ENCODE measurements at regions of chr20 and their contacts with region 1.

Region 1: GRCh38 chr20:20712474-20713243 is at the start of gene RALGAPA2:
- DNase-seq: peak; percentile 87 to 97 (median 94)
- ATAC-seq: peak; percentile 95
- H3K4me3 ChIP-seq: peak within 1 kb of the TSS; percentile 66 to 89
- H3K4me3 Mint-ChIP-seq: peak within 1 kb of the TSS; percentile 98
- H3K27ac ChIP-seq: peak within 1 kb of the TSS; percentile 59 to 93
- H3K27ac Mint-ChIP-seq: peak within 1 kb of the TSS; percentile 97
- H3K4me1 ChIP-seq: peaks cover 14% of the 10 kb centered on the region
- H3K4me1 Mint-ChIP-seq: peaks cover 30% of the 10 kb centered on the region
- H3K27me3 ChIP-seq: no peaks in the 10 kb centered on the region
- H3K27me3 Mint-ChIP-seq: peaks cover 2% of the 10 kb centered on the region
- CTCF ChIP-seq: no peak
- total RNA-seq, gene RALGAPA2: 15.4 to 17.5 TPM

Region 2: DNA sequence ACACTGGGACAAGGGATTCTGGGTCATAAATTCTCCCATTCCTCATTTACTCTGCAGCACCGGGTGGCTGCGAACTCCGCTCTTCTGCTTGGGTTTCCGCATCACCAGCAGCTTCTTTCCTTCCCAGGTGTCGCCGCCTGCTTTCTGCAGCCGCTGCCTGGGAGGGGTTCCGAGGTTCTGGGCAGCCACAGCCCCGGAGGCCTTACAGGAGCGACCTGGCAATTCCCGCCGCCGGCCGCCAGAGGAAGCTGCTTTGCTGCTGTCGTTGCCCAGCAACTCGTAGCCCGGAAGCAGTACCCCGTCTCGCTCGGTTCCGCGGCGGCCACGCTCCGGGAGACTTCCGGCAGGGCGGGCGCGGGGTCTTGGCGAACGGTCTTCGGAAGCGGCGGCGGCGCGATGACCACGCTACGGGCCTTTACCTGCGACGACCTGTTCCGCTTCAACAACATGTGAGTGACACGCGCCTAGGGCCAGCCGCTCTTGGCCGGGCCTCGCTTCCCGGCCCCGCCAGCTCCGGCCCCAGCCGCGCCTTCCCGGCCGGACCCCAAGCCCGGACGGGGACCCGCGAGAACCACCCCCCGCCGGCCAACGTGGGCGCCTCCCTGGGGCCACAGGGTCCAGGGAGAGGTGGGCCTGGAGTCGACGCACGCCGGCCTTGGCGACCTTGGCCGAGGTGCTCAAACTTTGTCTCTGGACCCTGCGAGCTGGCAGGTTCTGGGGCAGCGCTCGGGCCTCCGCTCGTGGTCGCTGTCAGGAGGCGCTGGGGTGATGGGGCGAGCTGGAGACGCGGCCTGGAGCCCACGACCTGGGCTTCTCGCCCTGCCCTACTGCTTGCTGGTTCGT is 695.4 kb before region 1 on chr20 and contains the start of gene NAA20:
- CTCF ChIA-PET with region 1: no interaction called
- POLR2A ChIA-PET with region 1: interaction called, 3 read pairs
- intact Hi-C with region 1: loop called in 1 of 2 experiments (anchors 2 kb)
- DNase-seq: peak; percentile 75 to 94 (median 91)
- ATAC-seq: peak; percentile 94
- H3K4me3 ChIP-seq: peak within 1 kb of the TSS; percentile 77 to 89
- H3K4me3 Mint-ChIP-seq: peak within 1 kb of the TSS; percentile 91
- H3K27ac ChIP-seq: peak within 1 kb of the TSS; percentile 63 to 82
- H3K27ac Mint-ChIP-seq: peak within 1 kb of the TSS; percentile 91
- H3K4me1 ChIP-seq: peaks cover 44% of the 10 kb centered on the region
- H3K4me1 Mint-ChIP-seq: peaks cover 53% of the 10 kb centered on the region
- H3K27me3 ChIP-seq: no peaks in the 10 kb centered on the region
- H3K27me3 Mint-ChIP-seq: no peaks in the 10 kb centered on the region
- CTCF ChIP-seq: peak; percentile 58
- total RNA-seq, gene NAA20: 32.9 to 33.2 TPM

Region 3: GRCh38 chr20:20052074-20052970 is 660.3 kb before region 1 on chr20 and contains the starts of genes CFAP61 and CRNKL1:
- CTCF ChIA-PET with region 1: no interaction called
- POLR2A ChIA-PET with region 1: no interaction called
- intact Hi-C with region 1: loop called in 1 of 2 experiments (anchors 1 kb)
- DNase-seq: peak; percentile 93 to 99 (median 98)
- ATAC-seq: peak; percentile 94
- H3K4me3 ChIP-seq: peak within 1 kb of the TSS; percentile 86 to 96
- H3K4me3 Mint-ChIP-seq: peak within 1 kb of the TSS; percentile 99
- H3K27ac ChIP-seq: peak within 1 kb of the TSS; percentile 86 to 92
- H3K27ac Mint-ChIP-seq: peak within 1 kb of the TSS; percentile 98
- H3K4me1 ChIP-seq: peaks cover 12% of the 10 kb centered on the region
- H3K4me1 Mint-ChIP-seq: peaks cover 29% of the 10 kb centered on the region
- H3K27me3 ChIP-seq: no peaks in the 10 kb centered on the region
- H3K27me3 Mint-ChIP-seq: peaks cover 10% of the 10 kb centered on the region
- CTCF ChIP-seq: no peak
- total RNA-seq, gene CFAP61: not detected
- total RNA-seq, gene CRNKL1: 34.1 to 39.7 TPM

Region 4: GRCh38 chr20:20489054-20489453 is 223.6 kb before region 1 on chr20:
- CTCF ChIA-PET with region 1: no interaction called
- POLR2A ChIA-PET with region 1: no interaction called
- intact Hi-C with region 1: no loop called
- DNase-seq: no peak
- ATAC-seq: no peak
- H3K4me3 ChIP-seq: no peak overlapping the region
- H3K4me3 Mint-ChIP-seq: no peak overlapping the region
- H3K27ac ChIP-seq: no peak overlapping the region
- H3K27ac Mint-ChIP-seq: no peak overlapping the region
- H3K4me1 ChIP-seq: no peaks in the 10 kb centered on the region
- H3K4me1 Mint-ChIP-seq: no peaks in the 10 kb centered on the region
- H3K27me3 ChIP-seq: no peaks in the 10 kb centered on the region
- H3K27me3 Mint-ChIP-seq: no peaks in the 10 kb centered on the region
- CTCF ChIP-seq: no peak

Region 5: DNA sequence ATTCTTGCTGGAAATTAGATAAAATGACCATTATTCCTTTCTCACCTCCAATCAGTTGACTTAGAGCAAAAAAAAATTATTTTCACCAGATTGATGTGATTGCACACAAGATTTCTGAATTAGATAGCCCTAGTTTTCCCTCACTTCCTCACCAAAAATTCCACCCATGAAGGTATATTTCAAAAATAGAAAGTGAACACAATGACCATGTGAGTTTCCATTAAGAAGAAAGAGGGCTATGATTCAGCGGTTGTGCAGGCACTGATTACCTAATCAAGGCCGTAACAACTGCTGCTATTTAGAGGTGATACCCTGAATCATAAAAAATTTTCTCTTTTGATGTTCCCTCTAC is 19.3 kb after region 1 on chr20:
- CTCF ChIA-PET with region 1: no interaction called
- POLR2A ChIA-PET with region 1: no interaction called
- intact Hi-C with region 1: no loop called
- DNase-seq: peak in 1 of 9 experiments; percentile 13
- ATAC-seq: no peak
- H3K4me3 ChIP-seq: no peak overlapping the region
- H3K4me3 Mint-ChIP-seq: no peak overlapping the region
- H3K27ac ChIP-seq: no peak overlapping the region
- H3K27ac Mint-ChIP-seq: no peak overlapping the region
- H3K4me1 ChIP-seq: peaks cover 11% of the 10 kb centered on the region
- H3K4me1 Mint-ChIP-seq: peaks cover 11% of the 10 kb centered on the region
- H3K27me3 ChIP-seq: no peaks in the 10 kb centered on the region
- H3K27me3 Mint-ChIP-seq: no peaks in the 10 kb centered on the region
- CTCF ChIP-seq: no peak

Region 6: DNA sequence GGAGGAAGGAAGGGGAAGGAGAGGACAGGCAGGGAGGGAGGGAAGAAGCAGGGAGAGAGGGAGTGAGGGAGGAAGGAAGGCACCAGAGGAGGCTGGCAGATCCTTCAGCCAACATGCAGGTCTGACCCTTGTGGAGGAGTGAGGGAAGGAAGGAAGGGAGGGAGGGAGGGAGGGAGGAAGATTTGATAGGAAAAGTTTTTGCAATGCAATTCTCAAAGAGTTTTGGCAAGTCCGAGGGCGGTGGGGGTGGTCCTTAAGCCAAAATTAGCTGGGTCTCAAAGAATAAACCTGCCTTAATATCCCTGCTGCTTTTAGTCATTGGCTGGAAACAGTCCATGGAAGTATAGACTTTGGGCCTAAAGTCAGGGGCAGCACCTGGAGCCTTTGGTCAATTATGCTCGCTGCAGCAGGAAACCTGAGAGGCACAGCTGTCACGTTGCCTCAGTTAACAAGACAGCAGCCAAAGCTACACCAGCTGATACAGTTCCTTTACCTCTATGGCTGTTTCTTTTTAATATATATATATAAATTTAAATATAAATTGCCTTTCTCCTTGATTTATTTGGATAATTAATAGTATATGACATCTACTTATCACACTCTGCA is 115.4 kb after region 1 on chr20:
- CTCF ChIA-PET with region 1: no interaction called
- POLR2A ChIA-PET with region 1: no interaction called
- intact Hi-C with region 1: no loop called
- DNase-seq: no peak
- ATAC-seq: no peak
- H3K4me3 ChIP-seq: no peak overlapping the region
- H3K4me3 Mint-ChIP-seq: no peak overlapping the region
- H3K27ac ChIP-seq: no peak overlapping the region
- H3K27ac Mint-ChIP-seq: no peak overlapping the region
- H3K4me1 ChIP-seq: no peaks in the 10 kb centered on the region
- H3K4me1 Mint-ChIP-seq: peaks cover 2% of the 10 kb centered on the region
- H3K27me3 ChIP-seq: peaks cover 0 to 2% of the 10 kb centered on the region in 2 experiments
- H3K27me3 Mint-ChIP-seq: peaks cover 26% of the 10 kb centered on the region
- CTCF ChIP-seq: no peak

Region 7: DNA sequence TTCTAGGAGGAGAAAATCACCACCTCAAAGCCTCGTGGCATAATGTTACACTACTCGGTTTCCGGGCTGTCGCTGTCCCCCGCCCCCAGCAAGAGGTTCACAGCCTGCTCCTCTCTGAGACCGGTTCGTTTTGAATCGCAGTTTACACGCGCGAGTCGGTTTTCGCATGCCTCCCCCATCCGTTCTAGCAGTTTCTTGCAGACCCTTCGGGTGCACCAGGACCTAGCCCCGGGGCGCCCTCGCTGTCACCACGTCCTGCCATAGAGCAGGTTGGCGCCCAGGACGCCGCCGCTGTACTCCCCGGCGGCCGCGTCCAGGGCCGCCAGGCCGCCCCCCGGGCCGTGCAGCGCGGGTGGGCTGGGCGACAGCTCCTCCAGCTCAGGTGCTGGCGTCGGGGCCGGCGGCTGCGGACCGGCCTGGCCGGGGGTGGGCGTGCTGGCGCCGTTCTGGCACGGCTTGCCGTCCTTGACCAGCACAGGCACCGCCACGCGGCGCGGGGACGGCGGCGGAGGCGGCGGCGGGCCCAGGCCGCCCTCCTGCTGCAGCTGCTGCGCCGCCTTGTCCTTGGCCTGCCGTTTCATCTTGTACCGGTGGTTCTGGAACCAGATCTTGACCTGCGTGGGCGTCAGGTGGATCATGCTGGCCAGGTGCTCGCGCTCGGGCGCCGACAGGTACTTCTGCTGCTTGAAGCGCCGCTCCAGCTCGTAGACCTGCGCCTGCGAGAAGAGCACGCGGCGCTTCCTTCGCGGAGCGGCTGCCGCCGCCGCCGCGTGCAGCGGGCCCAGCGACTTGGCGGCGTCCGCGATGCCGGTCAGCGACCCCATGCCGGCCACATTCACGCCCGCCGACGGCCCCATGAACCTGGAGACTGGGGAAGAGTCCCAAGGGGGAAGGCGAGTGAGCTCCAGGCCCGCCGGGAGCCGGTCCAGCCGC is 683.3 kb after region 1 on chr20:
- CTCF ChIA-PET with region 1: no interaction called
- POLR2A ChIA-PET with region 1: no interaction called
- intact Hi-C with region 1: loop called in 1 of 2 experiments (anchors 5 kb)
- DNase-seq: peak in 8 of 9 experiments; percentile 11 to 86 (median 64)
- ATAC-seq: peak; percentile 89
- H3K4me3 ChIP-seq: no peak overlapping the region
- H3K4me3 Mint-ChIP-seq: peak overlapping the region; percentile 79
- H3K27ac ChIP-seq: no peak overlapping the region
- H3K27ac Mint-ChIP-seq: no peak overlapping the region
- H3K4me1 ChIP-seq: peaks cover 13% of the 10 kb centered on the region
- H3K4me1 Mint-ChIP-seq: peaks cover 23% of the 10 kb centered on the region
- H3K27me3 ChIP-seq: peaks cover 54 to 58% of the 10 kb centered on the region in 2 experiments
- H3K27me3 Mint-ChIP-seq: peaks cover 71% of the 10 kb centered on the region
- CTCF ChIP-seq: no peak